ENCODE measurements at regions of chr18 and their contacts with region 1.

Region 1: GRCh38 chr18:38909972-38910371 is 1344.4 kb upstream of the CELF4 start:
- DNase-seq: no peak
- H3K4me3 ChIP-seq: no peak overlapping the region
- CTCF ChIP-seq: no peak
- POLR2A ChIP-seq: no peak

Region 2: DNA sequence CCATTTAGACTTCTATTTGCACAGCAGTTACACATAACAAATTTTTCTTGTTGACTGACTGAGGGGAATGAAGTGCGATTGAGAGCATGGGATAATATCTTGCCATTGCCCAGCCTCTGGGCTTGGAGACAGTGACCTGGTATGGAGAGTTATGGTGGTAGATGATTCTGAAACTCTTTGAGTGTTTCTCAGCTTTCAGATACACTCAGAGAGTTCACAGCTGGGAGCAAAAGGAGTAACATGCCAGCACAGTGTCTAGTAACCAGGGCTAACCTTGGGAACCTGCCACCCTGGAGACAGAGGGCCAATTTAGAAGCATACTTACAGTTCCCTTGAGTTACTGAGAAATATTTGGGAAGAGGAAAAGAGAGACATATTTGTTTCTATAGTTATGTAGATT is 245.0 kb before region 1 on chr18:
- intact Hi-C with region 1: loop called (anchors 2 kb)
- DNase-seq: no peak
- H3K4me3 ChIP-seq: no peak overlapping the region
- CTCF ChIP-seq: no peak
- POLR2A ChIP-seq: no peak